Panc1 (cell line): ENCODE measurements at regions of chr11 and their contacts with region 1.

Region 1: GRCh38 chr11:64053699-64054098 is 18.0 kb downstream of the FLRT1 start:
- DNase-seq: no peak
- ATAC-seq: no peak
- H3K4me3 ChIP-seq: no peak overlapping the region
- H3K27ac ChIP-seq: no peak overlapping the region
- H3K4me1 ChIP-seq: peaks cover 6% of the 10 kb centered on the region; the same call in 1 of the 2 replicates
- H3K27me3 ChIP-seq: no peaks in the 10 kb centered on the region
- CTCF ChIP-seq: no peak

Region 2: DNA sequence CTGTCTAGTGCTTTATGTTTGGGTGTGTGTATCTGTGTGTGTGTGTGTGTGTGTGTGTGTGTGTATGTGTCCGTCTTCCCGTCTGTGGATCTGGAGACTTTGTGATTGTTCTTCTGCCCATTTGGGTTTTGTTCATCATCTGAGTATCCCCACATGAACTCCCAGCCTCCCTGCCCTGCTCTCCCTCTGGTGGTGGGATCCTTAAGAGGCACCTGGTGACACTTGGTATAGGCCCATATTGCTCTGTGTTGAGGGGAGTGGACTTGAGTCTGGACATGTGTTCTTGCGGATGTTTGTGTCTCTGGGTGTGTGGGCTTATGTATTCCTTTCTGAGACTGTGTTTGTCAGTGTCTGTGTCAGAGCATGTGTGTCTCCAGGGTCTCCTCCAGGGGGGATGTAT is 152.0 kb before region 1 on chr11:
- CTCF ChIA-PET with region 1: no interaction called
- POLR2A ChIA-PET with region 1: no interaction called
- in situ Hi-C with region 1: no loop called
- intact Hi-C with region 1: no loop called
- DNase-seq: no peak
- ATAC-seq: peak; percentile 71; the same call in 1 of the 2 replicates
- H3K4me3 ChIP-seq: no peak overlapping the region
- H3K27ac ChIP-seq: no peak overlapping the region
- H3K4me1 ChIP-seq: no peaks in the 10 kb centered on the region
- H3K27me3 ChIP-seq: no peaks in the 10 kb centered on the region
- CTCF ChIP-seq: no peak; the same call in 1 of the 2 replicates

Region 3: GRCh38 chr11:64088162-64089026 is 34.7 kb after region 1 on chr11:
- CTCF ChIA-PET with region 1: no interaction called
- POLR2A ChIA-PET with region 1: no interaction called
- in situ Hi-C with region 1: no loop called
- intact Hi-C with region 1: no loop called
- DNase-seq: no peak
- ATAC-seq: peak; percentile 67
- H3K4me3 ChIP-seq: no peak overlapping the region
- H3K27ac ChIP-seq: peak overlapping the region; percentile 72; the same call in 1 of the 2 replicates
- H3K4me1 ChIP-seq: peaks cover 50% of the 10 kb centered on the region
- H3K27me3 ChIP-seq: no peaks in the 10 kb centered on the region
- CTCF ChIP-seq: peak; percentile 88

Region 4: DNA sequence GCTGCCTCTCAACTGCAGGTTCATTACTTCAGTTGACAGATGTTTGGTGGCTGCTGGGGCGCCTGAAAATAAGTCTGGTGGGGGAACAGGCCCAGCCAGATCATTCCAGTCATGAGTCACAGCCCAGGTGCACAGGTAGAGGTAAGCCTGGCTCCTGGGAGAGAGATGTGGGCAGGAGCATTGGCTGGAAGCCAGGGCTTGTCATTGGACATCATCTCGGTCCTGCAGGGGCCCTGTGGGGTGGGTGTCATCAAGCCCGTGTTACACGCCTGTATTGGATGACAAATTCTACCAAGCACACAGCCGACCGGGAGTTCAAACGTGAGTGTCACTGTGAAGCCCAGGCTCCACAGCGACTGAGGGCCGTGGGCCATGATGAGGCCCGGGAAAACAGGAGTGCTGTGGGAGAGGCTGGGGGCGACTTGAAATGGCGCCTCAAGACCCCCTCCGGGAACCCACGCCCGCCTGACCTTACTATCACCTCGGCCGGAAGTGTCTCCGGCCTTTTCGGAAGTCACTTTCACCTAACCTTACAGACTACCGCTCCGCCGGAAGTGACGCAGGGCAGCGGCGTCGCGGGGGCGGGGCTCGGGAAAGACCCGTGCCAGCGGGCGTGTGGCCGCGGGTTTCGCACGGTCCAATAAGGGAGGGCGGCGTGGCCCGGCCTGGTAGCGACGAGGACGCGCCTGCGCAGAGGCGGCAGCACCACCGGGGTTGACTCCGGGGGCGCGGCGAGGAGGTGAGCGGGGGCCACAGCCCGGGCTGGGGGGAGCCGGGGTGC is 186.9 kb after region 1 on chr11 and contains the start of gene FKBP2:
- CTCF ChIA-PET with region 1: no interaction called
- POLR2A ChIA-PET with region 1: interaction called, 20 read pairs
- in situ Hi-C with region 1: no loop called
- intact Hi-C with region 1: no loop called
- DNase-seq: peak; percentile 78
- ATAC-seq: peak; percentile 69
- H3K4me3 ChIP-seq: peak within 1 kb of the TSS; percentile 59 to 60
- H3K27ac ChIP-seq: peak within 1 kb of the TSS; percentile 97
- H3K4me1 ChIP-seq: peaks cover 30% of the 10 kb centered on the region
- H3K27me3 ChIP-seq: no peaks in the 10 kb centered on the region
- CTCF ChIP-seq: no peak
- total RNA-seq, gene FKBP2: 71.8 TPM